ENCODE measurements at regions of chr1 and their contacts with region 1.

Region 1: GRCh38 chr1:44200336-44200735 is 12.9 kb upstream of the DMAP1 start:
- DNase-seq: no peak
- ATAC-seq: no peak
- H3K4me3 ChIP-seq: no peak overlapping the region
- H3K4me3 Mint-ChIP-seq: no peak overlapping the region
- H3K27ac ChIP-seq: no peak overlapping the region
- H3K27ac Mint-ChIP-seq: no peak overlapping the region
- H3K4me1 ChIP-seq: no peaks in the 10 kb centered on the region
- H3K4me1 Mint-ChIP-seq: no peaks in the 10 kb centered on the region
- H3K27me3 ChIP-seq: no peaks in the 10 kb centered on the region
- H3K27me3 Mint-ChIP-seq: peaks cover 11% of the 10 kb centered on the region
- CTCF ChIP-seq: no peak

Region 2: GRCh38 chr1:44237721-44238457 is 37.6 kb after region 1 on chr1:
- CTCF ChIA-PET with region 1: no interaction called
- POLR2A ChIA-PET with region 1: no interaction called
- intact Hi-C with region 1: loop called in 1 of 2 experiments (anchors 5 kb)
- DNase-seq: peak in 8 of 14 experiments; percentile 24 to 63 (median 38)
- ATAC-seq: peak; percentile 99
- H3K4me3 ChIP-seq: no peak overlapping the region
- H3K4me3 Mint-ChIP-seq: no peak overlapping the region
- H3K27ac ChIP-seq: no peak overlapping the region
- H3K27ac Mint-ChIP-seq: no peak overlapping the region
- H3K4me1 ChIP-seq: peaks cover 7% of the 10 kb centered on the region
- H3K4me1 Mint-ChIP-seq: peaks cover 18% of the 10 kb centered on the region
- H3K27me3 ChIP-seq: no peaks in the 10 kb centered on the region
- H3K27me3 Mint-ChIP-seq: no peaks in the 10 kb centered on the region
- CTCF ChIP-seq: peak; percentile 47

Measured in CD4-positive, alpha-beta T cell (primary cell).